Gastrocnemius medialis (tissue), 4 donors: ENCODE measurements at regions of chr16 and their contacts with region 1.

Region 1: GRCh38 chr16:20175358-20175757 is 101.7 kb upstream of the GPR139 start:
- DNase-seq: no peak
- ATAC-seq: no peak
- H3K4me3 ChIP-seq: no peak overlapping the region
- H3K27ac ChIP-seq: no peak overlapping the region
- H3K4me1 ChIP-seq: no peaks in the 10 kb centered on the region
- H3K27me3 ChIP-seq: no peaks in the 10 kb centered on the region
- CTCF ChIP-seq: no peak
- POLR2A ChIP-seq: no peak

Region 2: GRCh38 chr16:20004932-20005331 is 170.4 kb before region 1 on chr16:
- in situ Hi-C with region 1: no loop called
- intact Hi-C with region 1: no loop called
- DNase-seq: no peak
- ATAC-seq: no peak
- H3K4me3 ChIP-seq: no peak overlapping the region
- H3K27ac ChIP-seq: no peak overlapping the region
- H3K4me1 ChIP-seq: no peaks in the 10 kb centered on the region
- H3K27me3 ChIP-seq: no peaks in the 10 kb centered on the region
- CTCF ChIP-seq: no peak
- POLR2A ChIP-seq: no peak

Region 3: GRCh38 chr16:20084624-20085211 is 90.6 kb before region 1 on chr16:
- in situ Hi-C with region 1: loop called in 1 of 4 experiments (anchors 25 kb)
- intact Hi-C with region 1: no loop called
- DNase-seq: no peak
- ATAC-seq: no peak
- H3K4me3 ChIP-seq: no peak overlapping the region
- H3K27ac ChIP-seq: no peak overlapping the region
- H3K4me1 ChIP-seq: no peaks in the 10 kb centered on the region
- H3K27me3 ChIP-seq: peaks cover 0 to 2% (median 0%) of the 10 kb centered on the region in 3 donors
- CTCF ChIP-seq: no peak
- POLR2A ChIP-seq: no peak